ENCODE measurements at regions of chr1 and their contacts with region 1.

Region 1: DNA sequence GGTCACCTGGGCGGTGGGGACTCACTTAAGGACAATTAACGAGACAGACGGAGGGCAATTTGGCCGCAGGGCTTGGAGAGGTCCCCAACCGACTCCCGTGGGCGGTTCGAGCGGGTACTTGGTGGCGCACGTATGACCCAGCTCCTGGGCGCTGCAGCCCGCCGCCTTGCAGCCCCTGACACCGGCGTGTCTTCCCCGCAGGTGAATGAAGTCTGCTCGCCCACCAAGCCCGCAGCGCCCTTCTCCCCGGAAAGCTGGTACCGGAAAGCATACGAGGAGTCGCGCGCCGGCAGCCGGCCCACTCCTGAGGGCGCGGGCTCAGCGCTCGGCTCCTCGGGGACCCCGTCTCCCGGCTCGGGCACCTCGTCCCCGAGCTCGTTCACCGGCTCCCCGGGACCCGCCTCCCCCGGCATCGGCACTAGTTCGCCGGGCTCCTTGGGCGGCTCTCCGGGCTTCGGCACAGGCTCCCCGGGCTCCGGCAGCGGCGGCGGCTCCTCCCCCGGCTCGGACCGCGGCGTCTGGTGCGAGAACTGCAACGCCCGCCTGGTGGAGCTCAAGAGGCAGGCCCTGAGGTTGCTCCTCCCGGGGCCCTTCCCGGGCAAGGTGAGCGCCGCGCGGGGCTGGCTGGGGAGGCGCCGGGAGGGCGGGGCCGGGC is 1.4 kb downstream of the KIF26B start:
- DNase-seq: peak; percentile 81 to 89
- ATAC-seq: peak; percentile 81
- H3K4me3 ChIP-seq: peak overlapping the region in 1 of 2 donors; percentile 18
- H3K27ac ChIP-seq: no peak overlapping the region
- H3K4me1 ChIP-seq: no peaks in the 10 kb centered on the region
- H3K27me3 ChIP-seq: peaks cover 0 to 2% of the 10 kb centered on the region in 2 donors

Region 2: DNA sequence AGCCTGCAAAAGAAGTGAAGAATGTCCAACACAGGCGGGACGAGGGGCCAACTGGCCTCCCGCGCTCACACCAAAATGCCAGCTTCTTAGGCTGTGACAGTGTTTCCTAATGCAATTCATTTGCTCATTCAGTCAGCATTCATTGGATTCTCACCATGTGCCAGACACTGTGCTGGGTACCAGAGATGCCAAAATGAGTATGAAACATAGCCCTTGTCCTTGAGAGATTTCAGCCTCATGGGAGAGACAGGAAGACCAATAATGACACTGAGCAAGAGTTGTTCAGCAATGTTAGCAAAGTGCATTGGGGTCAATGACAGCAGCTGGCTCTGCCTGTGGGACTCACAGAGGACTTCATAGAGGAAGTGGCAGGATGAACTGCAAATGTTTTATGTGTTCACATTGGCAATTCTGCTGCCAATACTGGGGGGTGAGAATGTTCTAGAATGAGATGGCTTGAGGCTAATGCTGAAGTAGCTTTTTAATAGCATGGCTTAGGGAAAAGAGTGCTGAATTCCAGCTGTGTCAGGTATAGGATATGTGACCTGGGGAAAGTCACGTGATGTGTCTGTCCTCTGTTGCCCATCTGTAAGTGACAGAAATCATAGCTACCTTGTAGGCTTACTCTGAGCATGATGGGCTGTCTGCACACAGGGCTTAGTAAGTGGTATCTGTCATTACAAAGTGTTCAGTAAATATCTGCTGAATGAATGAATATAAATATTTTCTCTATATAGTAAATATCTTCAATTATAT is 59.7 kb before region 1 on chr1:
- intact Hi-C with region 1: no loop called
- DNase-seq: no peak
- ATAC-seq: no peak
- H3K4me3 ChIP-seq: no peak overlapping the region
- H3K27ac ChIP-seq: no peak overlapping the region
- H3K4me1 ChIP-seq: no peaks in the 10 kb centered on the region
- H3K27me3 ChIP-seq: no peaks in the 10 kb centered on the region

Region 3: GRCh38 chr1:246002725-246003441 is 846.7 kb after region 1 on chr1:
- intact Hi-C with region 1: loop called in 1 of 2 experiments (anchors 10 kb)
- DNase-seq: peak; percentile 86 to 90
- ATAC-seq: peak; percentile 77
- H3K4me3 ChIP-seq: no peak overlapping the region
- H3K27ac ChIP-seq: no peak overlapping the region
- H3K4me1 ChIP-seq: peaks cover 0 to 3% of the 10 kb centered on the region in 2 donors
- H3K27me3 ChIP-seq: no peaks in the 10 kb centered on the region

Region 4: DNA sequence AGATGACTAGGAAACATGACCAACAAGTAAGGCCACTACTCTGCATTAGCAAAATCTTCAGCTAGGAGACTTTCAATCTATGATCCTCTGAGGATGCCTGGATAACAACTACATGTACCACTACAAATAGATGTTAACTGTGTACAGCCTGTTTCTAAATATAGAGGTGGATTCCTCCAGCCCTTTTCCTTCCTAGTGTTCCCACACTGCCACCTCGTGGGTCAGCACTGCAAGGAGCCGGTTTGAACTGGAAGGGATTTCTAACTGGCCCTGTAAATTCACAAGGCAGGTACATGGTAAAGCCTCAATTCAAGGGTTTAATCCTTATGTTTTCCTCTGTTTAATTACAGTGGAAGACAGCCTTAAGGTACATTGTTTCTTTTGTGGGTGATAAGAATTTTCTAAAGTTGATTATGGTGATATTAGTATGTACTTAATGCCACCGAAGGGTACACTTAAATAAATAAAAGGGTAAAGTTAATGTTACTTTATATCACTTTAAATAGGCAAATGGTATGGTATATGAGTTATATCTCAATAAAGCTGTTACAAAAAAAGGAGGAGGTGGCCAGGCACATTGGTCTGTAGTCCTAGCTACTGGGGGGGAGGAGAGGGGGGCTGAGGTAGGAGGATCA is 1336.5 kb after region 1 on chr1:
- intact Hi-C with region 1: loop called (anchors 5 kb)
- DNase-seq: no peak
- ATAC-seq: peak; percentile 63
- H3K4me3 ChIP-seq: no peak overlapping the region
- H3K27ac ChIP-seq: no peak overlapping the region
- H3K4me1 ChIP-seq: no peaks in the 10 kb centered on the region
- H3K27me3 ChIP-seq: no peaks in the 10 kb centered on the region

Measured in aorta (tissue), 5 donors.